IMR-90 (cell line): ENCODE measurements at regions of chr11 and their contacts with region 1.

Region 1: DNA sequence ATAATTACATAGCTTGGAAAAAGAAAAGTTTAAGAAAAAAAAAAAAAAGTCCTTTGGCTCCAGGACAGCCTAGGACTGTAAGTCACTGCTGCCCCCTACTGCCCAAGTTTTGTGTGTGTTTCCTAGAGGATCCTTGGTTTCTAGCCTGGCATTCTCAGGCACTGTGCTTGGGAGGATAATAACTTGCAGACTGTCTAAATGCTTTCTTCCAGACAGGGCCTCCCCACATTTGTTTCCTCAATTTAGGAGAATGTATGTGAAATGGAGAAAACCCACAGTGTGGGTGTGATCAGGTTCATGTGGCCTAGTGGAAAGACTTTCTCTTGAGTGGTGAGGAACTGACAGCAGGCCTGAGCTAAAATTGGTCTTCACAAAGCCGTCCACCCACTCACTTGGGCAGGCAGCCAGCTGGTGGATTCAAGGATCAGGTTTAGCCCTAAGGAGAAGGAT is 191.0 kb downstream of the NAV2 start:
- DNase-seq: peak; percentile 83
- ATAC-seq: peak; percentile 85
- H3K4me3 ChIP-seq: no peak overlapping the region
- H3K27ac ChIP-seq: no peak overlapping the region
- H3K4me1 ChIP-seq: no peaks in the 10 kb centered on the region
- H3K27me3 ChIP-seq: no peaks in the 10 kb centered on the region
- CTCF ChIP-seq: peak; percentile 84
- POLR2A ChIP-seq: no peak
- RAD21 ChIP-seq: peak; percentile 89

Region 2: DNA sequence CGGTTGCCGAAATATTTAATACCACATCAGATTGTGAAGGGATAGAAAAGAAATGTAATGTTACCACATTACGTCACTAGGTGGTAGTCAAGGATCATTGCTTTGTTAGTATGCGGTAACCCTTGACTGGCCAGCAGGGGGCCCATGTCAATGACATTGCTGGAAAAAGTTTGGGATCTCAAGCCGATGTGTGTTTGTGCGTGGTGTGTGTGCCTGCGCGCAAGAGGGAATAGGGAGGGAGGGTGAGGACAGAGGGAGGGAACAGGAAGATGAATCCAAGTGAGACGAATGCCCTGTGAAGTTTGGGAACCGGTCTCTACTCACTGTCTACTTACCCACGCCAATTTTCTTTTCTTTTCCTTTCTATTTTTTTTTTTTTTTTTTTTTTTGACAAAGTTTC is 832.4 kb before region 1 on chr11:
- CTCF ChIA-PET with region 1: no interaction called
- POLR2A ChIA-PET with region 1: no interaction called
- dilution Hi-C with region 1: no loop called
- in situ Hi-C with region 1: no loop called
- intact Hi-C with region 1: loop called (anchors 10 kb)
- DNase-seq: peak; percentile 82
- ATAC-seq: peak; percentile 99
- H3K4me3 ChIP-seq: peak overlapping the region; percentile 26; the same call in 1 of the 2 replicates
- H3K27ac ChIP-seq: no peak overlapping the region
- H3K4me1 ChIP-seq: no peaks in the 10 kb centered on the region
- H3K27me3 ChIP-seq: peaks cover 18% of the 10 kb centered on the region
- CTCF ChIP-seq: peak; percentile 100
- POLR2A ChIP-seq: no peak
- RAD21 ChIP-seq: peak; percentile 89

Region 3: DNA sequence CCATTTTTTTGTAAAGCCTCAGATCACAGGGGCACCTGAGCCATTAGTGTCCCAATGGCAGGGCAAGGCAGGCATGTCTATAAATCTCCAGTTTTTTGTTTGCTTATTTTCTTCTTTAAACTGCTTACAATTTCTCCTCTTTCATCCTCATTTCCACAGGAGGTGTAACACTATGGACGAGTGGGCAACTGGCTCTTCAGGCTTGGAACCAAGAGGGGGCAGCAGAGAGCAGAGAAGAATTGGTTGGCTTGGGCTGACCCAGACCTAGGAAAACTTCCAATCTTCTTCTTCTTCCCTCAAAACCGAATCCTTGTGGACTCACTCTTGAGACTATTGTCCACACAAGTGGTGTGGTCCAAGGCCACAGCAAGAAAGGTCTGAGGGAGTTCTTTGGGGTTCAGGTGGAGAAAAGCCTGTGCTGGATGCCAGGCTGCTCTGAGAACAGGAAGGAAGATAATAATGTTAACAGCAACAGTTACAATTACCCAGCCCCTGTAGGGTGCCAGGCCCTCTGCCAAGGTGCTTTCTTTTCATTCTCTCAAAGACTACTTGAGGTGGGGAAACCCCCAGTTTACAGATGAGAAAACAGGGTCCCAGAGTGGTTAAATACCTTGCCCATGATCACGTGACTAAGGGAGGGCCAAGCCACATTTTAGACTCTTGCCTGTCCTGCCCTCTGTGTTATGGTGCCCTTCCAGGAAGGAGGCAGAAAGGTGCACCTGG is 592.2 kb before region 1 on chr11:
- CTCF ChIA-PET with region 1: no interaction called
- POLR2A ChIA-PET with region 1: no interaction called
- dilution Hi-C with region 1: no loop called
- in situ Hi-C with region 1: loop called (anchors 10 kb)
- intact Hi-C with region 1: loop called (anchors 10 kb)
- DNase-seq: peak; percentile 50
- ATAC-seq: peak; percentile 100
- H3K4me3 ChIP-seq: no peak overlapping the region
- H3K27ac ChIP-seq: no peak overlapping the region
- H3K4me1 ChIP-seq: no peaks in the 10 kb centered on the region
- H3K27me3 ChIP-seq: peaks cover 45% of the 10 kb centered on the region
- CTCF ChIP-seq: peak; percentile 88
- POLR2A ChIP-seq: no peak
- RAD21 ChIP-seq: peak; percentile 83

Region 4: GRCh38 chr11:19561011-19561410 is 342.6 kb before region 1 on chr11:
- CTCF ChIA-PET with region 1: interaction called, 13 read pairs
- POLR2A ChIA-PET with region 1: no interaction called
- dilution Hi-C with region 1: no loop called
- in situ Hi-C with region 1: loop called (anchors 5 kb)
- intact Hi-C with region 1: loop called (anchors 1 kb)
- DNase-seq: peak; percentile 24
- ATAC-seq: no peak
- H3K4me3 ChIP-seq: no peak overlapping the region
- H3K27ac ChIP-seq: no peak overlapping the region
- H3K4me1 ChIP-seq: no peaks in the 10 kb centered on the region
- H3K27me3 ChIP-seq: peaks cover 21% of the 10 kb centered on the region
- CTCF ChIP-seq: no peak
- POLR2A ChIP-seq: no peak
- RAD21 ChIP-seq: no peak

Region 5: GRCh38 chr11:19742588-19743292 is 160.9 kb before region 1 on chr11:
- CTCF ChIA-PET with region 1: interaction called, 12 read pairs
- POLR2A ChIA-PET with region 1: no interaction called
- dilution Hi-C with region 1: no loop called
- in situ Hi-C with region 1: loop called (anchors 5 kb)
- intact Hi-C with region 1: loop called (anchors 1 kb)
- DNase-seq: peak; percentile 79
- ATAC-seq: peak; percentile 92
- H3K4me3 ChIP-seq: no peak overlapping the region
- H3K27ac ChIP-seq: no peak overlapping the region
- H3K4me1 ChIP-seq: no peaks in the 10 kb centered on the region
- H3K27me3 ChIP-seq: no peaks in the 10 kb centered on the region
- CTCF ChIP-seq: peak; percentile 89
- POLR2A ChIP-seq: no peak
- RAD21 ChIP-seq: peak; percentile 97

Region 6: DNA sequence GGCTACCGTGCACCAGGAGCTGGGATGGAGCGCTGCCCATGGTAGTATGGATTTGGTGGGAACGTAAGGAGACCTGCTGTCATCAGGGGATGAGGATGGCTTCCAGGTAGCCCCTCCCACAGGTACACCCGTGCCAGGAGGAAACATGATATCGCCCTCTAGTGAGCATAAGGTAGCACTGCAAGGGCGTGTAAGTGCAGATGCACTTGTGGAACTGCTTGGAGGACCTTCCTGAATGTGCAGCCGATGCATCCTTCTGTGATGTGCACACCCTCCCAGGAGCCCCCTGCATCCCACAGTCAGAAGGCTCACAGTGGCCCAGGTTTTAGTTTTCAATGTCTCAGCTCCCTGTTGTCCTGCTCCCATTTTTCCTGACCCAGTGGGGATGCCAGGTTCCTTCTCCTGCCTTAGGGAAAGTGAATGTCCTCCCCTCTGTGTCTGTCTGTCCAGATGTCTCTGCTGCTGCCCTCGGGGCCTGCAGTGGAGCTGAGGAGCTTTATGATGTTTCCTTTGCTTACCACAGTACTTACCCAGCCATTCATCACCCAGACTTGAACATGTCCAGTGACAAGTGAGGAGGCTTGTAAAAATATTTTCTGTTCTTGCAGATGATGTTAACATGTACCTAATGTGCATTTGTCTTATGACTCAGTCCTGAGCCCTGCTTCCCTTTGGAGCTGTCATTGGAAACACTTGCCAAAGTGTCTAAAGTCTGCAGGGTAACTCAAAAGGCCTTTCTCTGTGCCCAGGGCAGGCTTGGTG is 207.4 kb after region 1 on chr11:
- CTCF ChIA-PET with region 1: no interaction called
- POLR2A ChIA-PET with region 1: no interaction called
- dilution Hi-C with region 1: no loop called
- in situ Hi-C with region 1: no loop called
- intact Hi-C with region 1: loop called (anchors 1 kb)
- DNase-seq: peak; percentile 85
- ATAC-seq: peak; percentile 22
- H3K4me3 ChIP-seq: no peak overlapping the region
- H3K27ac ChIP-seq: peak overlapping the region; percentile 6; the same call in 1 of the 2 replicates
- H3K4me1 ChIP-seq: peaks cover 19% of the 10 kb centered on the region
- H3K27me3 ChIP-seq: no peaks in the 10 kb centered on the region
- CTCF ChIP-seq: peak; percentile 62
- POLR2A ChIP-seq: no peak
- RAD21 ChIP-seq: peak; percentile 57

Region 7: DNA sequence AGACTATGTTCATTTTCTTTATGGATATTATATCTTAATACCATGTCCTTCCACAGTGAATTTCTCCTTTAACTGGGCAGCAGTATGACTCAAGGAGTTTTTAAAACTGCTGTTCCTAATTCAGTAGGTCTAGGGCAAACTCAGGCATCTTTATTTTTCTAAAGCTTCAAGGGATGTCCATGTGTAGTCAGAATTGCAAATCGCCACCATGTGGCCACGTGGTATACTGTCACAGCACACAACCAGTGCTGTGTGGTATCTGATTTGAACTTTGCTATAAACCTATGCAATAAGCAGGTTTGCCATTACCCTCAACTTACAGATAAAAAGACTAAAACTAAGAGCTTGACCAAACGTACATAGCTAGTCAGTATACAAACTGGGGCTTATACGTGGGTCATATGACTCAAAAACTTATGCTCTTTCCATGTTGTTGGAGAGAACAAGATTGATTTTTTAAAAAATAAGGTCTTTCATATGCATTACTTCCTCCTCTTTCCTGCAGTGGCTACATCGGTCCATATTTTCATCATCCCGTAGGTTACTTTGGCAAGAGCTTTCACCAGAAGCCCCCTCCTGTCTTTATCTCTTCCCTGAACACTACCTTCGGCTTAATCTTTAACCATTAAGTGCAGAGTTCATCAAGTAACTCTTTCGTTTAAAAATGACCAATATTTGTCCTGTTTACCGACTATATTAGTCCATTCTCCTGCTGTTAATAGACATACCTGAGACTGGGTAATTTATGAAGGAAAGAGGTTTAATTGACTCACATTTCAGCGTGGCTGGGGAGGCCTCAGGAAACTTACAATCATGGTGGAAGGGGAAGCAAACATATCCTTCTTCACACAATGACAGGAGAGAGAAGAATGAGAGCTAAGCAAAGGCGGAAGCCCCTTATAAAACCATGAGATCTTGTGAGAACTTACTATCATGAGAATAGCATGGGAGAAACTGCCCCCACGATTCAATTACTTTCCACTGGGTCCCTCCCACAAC is 451.9 kb after region 1 on chr11:
- CTCF ChIA-PET with region 1: no interaction called
- POLR2A ChIA-PET with region 1: no interaction called
- dilution Hi-C with region 1: no loop called
- in situ Hi-C with region 1: no loop called
- intact Hi-C with region 1: loop called (anchors 2 kb)
- DNase-seq: peak; percentile 58
- ATAC-seq: peak; percentile 92
- H3K4me3 ChIP-seq: no peak overlapping the region
- H3K27ac ChIP-seq: no peak overlapping the region
- H3K4me1 ChIP-seq: peaks cover 2% of the 10 kb centered on the region; the same call in 1 of the 2 replicates
- H3K27me3 ChIP-seq: peaks cover 15% of the 10 kb centered on the region
- CTCF ChIP-seq: peak; percentile 62
- POLR2A ChIP-seq: no peak
- RAD21 ChIP-seq: peak; percentile 36; the same call in 1 of the 2 replicates